ENCODE measurements at regions of chr3 and their contacts with region 1.

Region 1: DNA sequence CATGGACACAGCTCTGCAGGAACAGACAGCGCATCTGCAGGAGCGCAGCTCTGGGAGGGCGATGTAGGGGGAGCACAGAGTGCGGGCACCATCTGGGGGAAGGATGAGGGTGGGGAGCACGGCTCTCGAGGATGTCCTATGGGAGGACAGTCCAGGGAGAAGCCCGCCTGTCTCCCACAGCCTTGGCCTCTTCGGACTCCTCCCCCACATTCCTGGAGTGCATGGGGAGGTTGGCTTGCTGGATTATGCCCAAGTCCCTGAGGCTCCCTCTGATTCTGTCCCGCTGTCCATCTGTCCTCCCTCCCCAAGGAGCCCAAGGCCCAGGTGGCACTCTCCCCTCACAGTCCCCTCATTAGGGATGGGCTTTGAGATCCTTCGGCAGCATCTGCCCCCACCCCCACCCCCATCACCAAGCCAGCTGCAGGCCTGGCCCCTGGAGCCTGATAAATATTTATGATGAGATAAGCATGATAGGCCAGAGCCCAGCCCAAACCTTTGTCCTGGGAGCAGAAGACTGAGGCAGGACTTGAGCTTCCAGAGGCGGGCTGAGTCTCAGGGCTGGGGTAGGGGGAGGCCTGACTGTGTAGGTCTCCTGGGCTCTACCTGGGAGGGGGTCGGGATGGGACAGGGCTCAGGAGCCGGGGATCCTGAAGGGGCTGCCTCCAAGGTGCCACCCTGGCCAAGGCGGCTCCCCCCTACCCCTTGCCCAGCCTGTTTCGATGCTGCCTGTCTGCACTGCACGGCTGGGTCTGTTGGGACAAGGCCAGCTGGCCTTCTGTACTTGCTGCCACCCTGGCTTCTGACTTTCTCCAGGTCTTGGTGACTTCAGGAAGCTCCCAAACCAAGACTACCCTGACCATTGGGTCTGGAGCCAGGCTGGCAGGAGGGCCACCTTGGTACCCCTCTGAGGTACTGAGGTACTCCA is 28.6 kb upstream of the SEMA3F start:
- DNase-seq: peak in 2 of 4 experiments; percentile 30 to 35
- ATAC-seq: no peak
- H3K4me3 ChIP-seq: no peak overlapping the region
- H3K27ac ChIP-seq: no peak overlapping the region
- H3K4me1 ChIP-seq: peaks cover 0 to 17% of the 10 kb centered on the region in 2 experiments; a peak in 2 of 5 replicates
- H3K27me3 ChIP-seq: peaks cover 0 to 7% of the 10 kb centered on the region in 2 experiments; a peak in 2 of 5 replicates
- CTCF ChIP-seq: no peak
- EP300 ChIP-seq: no peak
- POLR2A ChIP-seq: no peak
- RAD21 ChIP-seq: no peak

Region 2: DNA sequence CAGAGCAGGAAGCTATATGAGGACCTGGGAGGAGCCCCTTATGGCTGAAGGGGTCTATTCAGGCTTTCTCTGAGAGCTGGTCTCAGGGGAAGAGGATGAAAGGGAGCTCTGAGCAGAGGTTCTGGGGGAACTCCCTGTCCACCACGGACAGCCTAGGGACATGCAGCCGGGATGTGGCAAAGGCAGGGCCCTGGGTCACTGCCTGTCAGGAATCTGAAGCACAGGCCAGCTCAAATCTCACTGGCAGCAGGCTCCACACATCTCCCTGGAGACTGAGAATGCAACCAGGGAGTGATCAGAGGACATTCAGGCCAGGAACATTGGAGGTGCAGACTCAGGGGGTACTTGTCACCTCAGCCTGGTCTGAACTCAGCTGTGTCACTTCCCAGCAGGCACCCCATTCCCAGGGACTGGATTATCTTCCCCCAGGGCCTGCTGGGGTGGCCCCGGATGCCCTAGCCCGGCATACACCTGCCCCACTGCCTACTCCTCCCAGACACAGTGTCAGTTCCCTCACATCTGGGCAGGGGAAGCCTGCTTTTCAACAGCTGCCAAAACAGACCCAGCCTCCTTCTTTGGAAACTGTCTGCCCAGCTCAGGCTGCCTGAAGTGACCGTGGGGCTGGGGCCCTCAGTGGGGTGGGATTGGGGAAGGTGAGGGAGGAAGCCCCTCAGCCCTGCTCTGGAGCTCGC is 10.3 kb after region 1 on chr3:
- CTCF ChIA-PET with region 1: no interaction called
- POLR2A ChIA-PET with region 1: interaction called, 10 read pairs
- in situ Hi-C with region 1: no loop called
- intact Hi-C with region 1: no loop called
- DNase-seq: no peak
- ATAC-seq: no peak
- H3K4me3 ChIP-seq: no peak overlapping the region
- H3K27ac ChIP-seq: no peak overlapping the region
- H3K4me1 ChIP-seq: peaks cover 0 to 8% of the 10 kb centered on the region in 2 experiments; a peak in 2 of 5 replicates
- H3K27me3 ChIP-seq: peaks cover 0 to 13% of the 10 kb centered on the region in 2 experiments; a peak in 2 of 5 replicates
- CTCF ChIP-seq: no peak
- EP300 ChIP-seq: no peak
- POLR2A ChIP-seq: no peak
- RAD21 ChIP-seq: no peak

Measured in K562 (cell line).